ENCODE measurements at regions of chr6 and their contacts with region 1.

Region 1: DNA sequence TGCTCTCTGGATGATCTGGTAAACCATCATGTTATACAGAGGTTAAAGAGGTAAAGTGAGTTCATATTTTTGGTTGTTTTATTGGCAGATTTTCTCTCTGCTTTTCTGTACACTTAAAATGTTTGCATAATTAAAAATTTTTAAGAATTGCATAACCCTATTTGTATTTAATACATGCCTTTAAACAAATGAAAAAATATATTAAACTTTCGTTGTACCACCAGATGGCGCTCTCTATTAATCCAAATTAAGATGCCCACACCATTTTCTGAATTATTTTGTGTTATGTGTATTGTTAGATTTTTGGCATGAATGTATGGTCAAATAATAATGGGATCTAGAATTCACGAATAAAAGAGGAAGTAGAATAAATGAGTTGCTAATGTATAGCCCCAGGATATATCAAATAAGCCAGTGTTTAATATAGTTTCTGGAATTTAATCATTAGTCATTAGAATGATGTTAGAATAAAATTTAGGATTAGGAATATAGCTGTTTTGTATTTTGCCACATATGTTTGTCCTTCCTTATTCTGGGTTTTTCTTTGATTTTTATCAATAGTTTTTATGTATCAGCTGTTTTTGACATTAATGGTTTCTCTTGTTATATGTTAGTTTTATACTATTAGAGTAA is 38.9 kb downstream of the SMAP1 start:
- DNase-seq: peak in 5 of 42 donors; percentile 7 to 50 (median 12)

Region 2: GRCh38 chr6:70551566-70551965 is 155.0 kb before region 1 on chr6:
- intact Hi-C with region 1: no loop called
- DNase-seq: no peak

Region 3: DNA sequence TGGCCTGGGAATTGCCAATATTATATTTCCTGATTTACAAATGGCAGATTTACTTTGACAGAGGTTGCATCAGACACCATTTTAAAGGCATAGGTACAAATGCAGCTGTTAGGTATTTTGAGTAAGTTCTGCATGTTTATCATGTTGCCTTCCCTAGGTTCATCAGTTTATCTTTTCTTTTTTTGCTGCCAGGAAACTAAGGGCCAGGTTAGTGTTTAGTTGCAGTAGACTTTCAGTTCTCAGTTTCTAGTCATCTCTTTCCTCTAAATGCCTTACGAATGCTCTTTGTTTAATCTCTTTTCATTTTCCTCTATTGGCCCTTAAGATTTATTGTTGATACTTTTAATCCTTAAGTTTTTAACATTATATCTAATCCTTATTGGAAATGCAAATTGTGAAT is 91.0 kb after region 1 on chr6:
- intact Hi-C with region 1: no loop called
- DNase-seq: no peak

Region 4: DNA sequence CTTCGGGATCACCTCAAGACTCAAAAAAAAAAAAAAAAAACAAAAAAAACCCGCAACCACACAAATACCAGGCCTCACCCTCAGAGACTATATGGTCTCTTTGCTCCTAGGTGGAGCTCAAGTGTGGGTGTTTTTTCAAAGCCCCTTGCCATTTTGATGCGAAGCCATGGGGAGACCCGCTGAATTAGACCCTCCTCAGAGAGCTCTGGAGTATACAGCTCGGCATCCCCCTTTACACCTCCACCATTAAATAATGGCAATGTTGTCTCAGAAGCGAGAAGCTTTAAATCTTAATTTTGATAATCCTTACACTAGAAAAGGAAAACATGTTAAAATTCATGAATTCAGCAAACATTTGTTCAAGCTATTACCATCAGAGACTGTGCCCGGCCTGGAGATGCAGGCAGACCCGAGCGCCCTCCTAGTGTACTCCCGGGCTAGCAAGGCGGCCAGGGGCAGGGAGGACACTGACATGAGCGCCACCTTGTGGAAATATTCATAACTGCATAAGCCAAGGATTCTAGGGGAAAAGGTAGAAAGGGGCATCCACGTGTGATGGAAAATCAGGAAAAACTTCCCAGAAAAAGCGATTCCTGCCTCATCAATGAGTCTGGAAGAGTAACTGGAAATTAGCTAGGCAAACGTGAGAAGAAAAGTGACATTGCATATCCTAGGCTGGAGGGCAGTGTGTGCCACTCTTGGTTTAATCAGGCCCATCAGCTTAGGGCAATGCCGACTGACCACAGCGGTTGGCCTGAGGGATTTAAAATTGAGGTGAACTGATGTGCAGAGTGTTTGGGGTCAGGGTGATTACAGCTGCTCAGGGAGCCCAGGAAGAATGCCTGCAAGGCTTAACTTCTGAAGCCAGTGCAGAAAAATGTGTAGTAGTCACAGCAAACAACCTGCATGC is 177.7 kb after region 1 on chr6:
- intact Hi-C with region 1: loop called (anchors 5 kb)
- DNase-seq: peak in 41 of 42 donors; percentile 12 to 88 (median 66)

Region 5: DNA sequence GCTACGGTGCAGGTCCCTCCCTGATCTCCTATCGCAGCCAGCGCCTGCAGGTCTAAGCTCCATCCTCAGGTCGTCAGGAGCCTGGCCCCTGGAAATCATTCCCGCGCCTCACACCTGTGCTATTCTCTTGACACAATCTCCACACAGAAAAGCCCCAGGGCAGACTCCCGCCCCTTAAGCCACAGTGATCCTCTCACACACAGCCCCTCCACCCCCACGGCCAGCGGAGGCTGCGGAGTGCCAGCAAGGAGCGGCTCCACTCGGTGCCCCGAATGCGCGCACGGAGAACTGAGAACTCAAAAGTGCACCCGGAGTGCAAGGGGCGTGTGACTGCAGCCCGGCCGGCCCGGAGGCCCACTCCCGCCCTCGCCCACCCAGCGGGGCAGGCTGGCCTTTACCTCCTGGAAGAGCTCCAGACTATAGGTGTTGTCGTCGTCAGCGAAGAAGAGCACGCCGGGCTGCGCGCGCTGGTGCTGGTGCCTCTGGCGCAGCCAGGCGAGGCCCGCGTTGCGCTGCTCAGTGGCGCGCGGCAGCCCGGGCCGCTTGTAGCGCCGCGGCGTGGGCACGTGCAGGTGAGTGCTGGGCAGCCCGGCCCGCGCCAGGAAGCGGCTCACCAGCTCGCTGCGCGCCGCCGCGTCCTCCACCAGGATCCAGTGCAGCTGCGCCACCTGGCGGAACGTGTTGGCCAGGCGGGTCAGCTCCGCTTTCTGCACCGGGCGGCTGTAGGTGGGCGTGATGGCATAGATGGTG is 249.0 kb after region 1 on chr6:
- intact Hi-C with region 1: loop called (anchors 5 kb)
- DNase-seq: peak; percentile 63 to 94 (median 87)

Region 6: GRCh38 chr6:71012866-71013469 is 306.4 kb after region 1 on chr6:
- intact Hi-C with region 1: loop called (anchors 10 kb)
- DNase-seq: peak in 18 of 42 donors; percentile 19 to 66 (median 45)